Posterior vena cava (tissue), 2 donors: ENCODE measurements at regions of chr14 and their contacts with region 1.

Region 1: GRCh38 chr14:50954811-50955372 is 10.6 kb upstream of the PYGL start:
- DNase-seq: no peak

Region 2: DNA sequence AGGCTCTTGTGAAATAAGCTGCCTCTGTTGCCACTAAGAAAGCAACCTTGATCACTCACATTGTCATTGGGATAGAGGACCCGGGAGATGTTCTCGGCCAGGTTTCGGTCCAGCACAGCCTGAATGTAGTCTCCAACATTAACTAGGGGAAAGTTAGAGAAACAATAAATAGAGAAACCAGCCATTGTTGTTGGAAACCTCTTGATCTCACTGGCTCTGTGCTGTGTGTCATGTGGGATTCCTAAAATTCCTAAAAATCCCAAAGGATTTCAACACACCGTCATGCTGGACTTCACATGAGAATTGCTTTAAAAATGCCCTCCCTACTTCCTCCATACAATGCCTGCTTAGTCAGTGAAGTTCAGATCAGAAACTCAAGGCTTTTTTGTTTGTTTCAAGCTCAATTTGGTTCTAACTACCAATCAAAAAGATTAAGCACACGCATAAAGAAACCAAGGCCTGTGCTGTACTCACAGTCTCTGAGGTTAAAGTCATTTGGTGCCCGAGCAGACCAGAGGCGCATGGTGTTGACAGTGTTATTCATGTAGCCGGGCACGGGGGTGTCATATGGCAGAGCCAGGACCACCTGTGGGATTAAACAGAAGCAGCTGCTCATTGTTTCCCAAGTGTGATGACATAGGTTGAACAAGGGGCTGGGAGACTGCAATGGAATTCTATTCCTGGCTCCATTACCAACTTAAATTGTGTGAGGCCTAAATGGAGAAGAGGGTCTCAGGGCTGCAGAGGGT is 34.2 kb before region 1 on chr14:
- intact Hi-C with region 1: loop called in 1 of 2 experiments (anchors 1 kb)
- DNase-seq: no peak